ENCODE measurements at regions of chr2 and their contacts with region 1.

Region 1: GRCh38 chr2:119641562-119642258 is 37.3 kb upstream of the TMEM177 start:
- DNase-seq: peak; percentile 63 to 66
- ATAC-seq: peak; percentile 75 to 91 (median 84)
- H3K4me3 ChIP-seq: no peak overlapping the region
- H3K27ac ChIP-seq: no peak overlapping the region
- H3K4me1 ChIP-seq: peaks cover 0 to 22% (median 6%) of the 10 kb centered on the region in 9 donors
- H3K27me3 ChIP-seq: peaks cover 0 to 8% (median 0%) of the 10 kb centered on the region in 7 donors
- CTCF ChIP-seq: peak; percentile 69 to 97 (median 94)

Region 2: DNA sequence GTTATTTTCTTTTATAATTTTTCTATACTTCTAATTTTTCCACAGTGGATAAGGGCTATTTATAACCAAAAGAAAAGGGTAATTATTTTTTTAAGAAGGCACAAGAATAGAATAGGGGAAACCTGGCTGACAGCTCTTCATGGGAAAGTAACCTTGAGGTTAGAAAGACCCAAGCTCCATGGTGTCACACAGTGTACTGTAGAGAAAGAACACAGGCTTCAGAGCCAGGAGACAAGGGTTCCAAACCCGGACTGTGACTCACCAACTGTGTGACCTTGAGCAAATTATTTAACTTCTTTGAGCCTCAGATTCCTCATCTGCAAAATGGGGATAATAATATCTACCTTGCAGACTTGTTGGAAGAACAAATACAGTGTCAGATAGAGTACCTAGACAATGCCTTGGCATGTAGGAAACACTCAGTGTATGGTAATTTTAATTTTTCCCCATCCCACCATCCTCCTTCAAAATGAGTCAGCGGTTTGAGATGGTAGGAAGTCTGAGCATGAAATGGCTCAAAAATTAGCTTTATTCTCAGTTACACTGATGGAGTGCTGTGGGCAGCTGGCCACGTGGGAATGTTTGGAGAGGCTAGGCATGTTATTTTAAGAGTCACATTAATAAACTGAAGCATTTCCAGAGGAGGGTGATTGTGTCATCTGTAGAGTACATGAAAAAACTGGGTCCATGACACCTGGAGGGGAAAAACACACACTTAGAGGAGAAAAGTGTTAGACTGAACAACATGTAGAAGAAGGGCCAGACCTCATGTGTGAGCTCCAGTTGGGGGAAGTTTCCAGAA is 173.4 kb before region 1 on chr2:
- intact Hi-C with region 1: no loop called
- DNase-seq: no peak
- ATAC-seq: peak in 3 of 8 donors; percentile 37 to 74 (median 53)
- H3K4me3 ChIP-seq: no peak overlapping the region
- H3K27ac ChIP-seq: no peak overlapping the region
- H3K4me1 ChIP-seq: peaks cover 0 to 14% (median 0%) of the 10 kb centered on the region in 9 donors
- H3K27me3 ChIP-seq: no peaks in the 10 kb centered on the region
- CTCF ChIP-seq: no peak

Region 3: GRCh38 chr2:119517433-119517832 is 124.3 kb before region 1 on chr2:
- intact Hi-C with region 1: loop called in 1 of 10 experiments (anchors 10 kb)
- DNase-seq: peak; percentile 36 to 53
- ATAC-seq: peak; percentile 29 to 77 (median 66)
- H3K4me3 ChIP-seq: no peak overlapping the region
- H3K27ac ChIP-seq: no peak overlapping the region
- H3K4me1 ChIP-seq: peaks cover 0 to 5% (median 0%) of the 10 kb centered on the region in 9 donors
- H3K27me3 ChIP-seq: peaks cover 0 to 19% (median 12%) of the 10 kb centered on the region in 7 donors
- CTCF ChIP-seq: peak; percentile 26 to 73 (median 60)

Region 4: GRCh38 chr2:119759451-119760236 is 117.9 kb after region 1 on chr2 and contains the start of gene PTPN4:
- intact Hi-C with region 1: no loop called
- DNase-seq: peak; percentile 96 to 97
- ATAC-seq: peak; percentile 97 to 99 (median 98)
- H3K4me3 ChIP-seq: peak within 1 kb of the TSS; percentile 69 to 94 (median 86)
- H3K27ac ChIP-seq: peak within 1 kb of the TSS; percentile 81 to 97 (median 94)
- H3K4me1 ChIP-seq: peaks cover 0 to 55% (median 32%) of the 10 kb centered on the region in 9 donors
- H3K27me3 ChIP-seq: no peaks in the 10 kb centered on the region
- CTCF ChIP-seq: peak in 1 of 9 donors; percentile 13
- total RNA-seq, gene PTPN4: 25.9 to 56.1 (median 49.8) TPM